ENCODE measurements at regions of chr1 and their contacts with region 1.

Region 1: DNA sequence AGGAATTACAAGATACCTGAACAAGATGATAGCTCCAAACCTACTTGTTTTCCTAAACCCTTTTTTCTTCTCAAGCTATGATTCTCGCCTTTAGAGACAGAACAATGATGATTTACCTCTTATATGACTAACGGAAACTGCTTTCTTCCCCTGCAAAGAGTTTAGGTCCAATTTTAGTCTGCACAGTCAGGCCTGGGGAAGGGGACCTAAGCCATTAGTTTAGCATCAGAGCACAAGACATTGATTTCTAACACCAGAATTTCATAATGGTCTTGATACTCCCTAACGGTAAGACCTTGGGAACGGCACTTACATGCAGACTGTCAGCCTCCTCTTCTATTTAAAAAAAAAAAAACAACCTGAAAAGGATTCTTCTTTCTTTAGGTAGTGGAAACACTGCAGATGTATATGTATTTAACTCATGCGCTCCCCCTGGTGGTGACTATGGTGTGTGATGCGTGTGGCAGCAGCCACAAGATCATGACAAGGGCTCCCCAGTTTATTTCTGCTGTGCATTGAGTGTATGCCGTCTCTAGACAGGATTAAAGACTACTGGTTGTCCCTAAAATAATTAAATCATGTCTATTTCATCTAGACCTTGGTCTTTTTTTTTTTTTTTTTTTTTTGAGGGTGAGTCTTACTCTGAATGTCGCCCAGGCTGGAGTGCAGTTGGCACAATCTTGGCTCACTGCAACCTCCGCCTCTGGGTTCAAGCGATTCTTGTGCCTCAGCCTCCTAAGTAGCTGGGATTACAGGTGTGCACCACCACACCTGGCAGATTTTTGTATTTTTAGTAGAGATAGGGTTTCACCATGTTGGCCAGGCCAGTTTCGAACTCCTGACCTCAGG is 37.3 kb upstream of the TMEM222 start:
- DNase-seq: peak; percentile 88 to 93
- ATAC-seq: peak; percentile 90
- H3K4me3 ChIP-seq: no peak overlapping the region
- H3K27ac ChIP-seq: no peak overlapping the region
- H3K4me1 ChIP-seq: no peaks in the 10 kb centered on the region
- H3K27me3 ChIP-seq: no peaks in the 10 kb centered on the region

Region 2: GRCh38 chr1:27044613-27045151 is 240.0 kb before region 1 on chr1:
- intact Hi-C with region 1: loop called (anchors 5 kb)
- DNase-seq: peak; percentile 88 to 97
- ATAC-seq: peak; percentile 94
- H3K4me3 ChIP-seq: no peak overlapping the region
- H3K27ac ChIP-seq: no peak overlapping the region
- H3K4me1 ChIP-seq: no peaks in the 10 kb centered on the region
- H3K27me3 ChIP-seq: no peaks in the 10 kb centered on the region

Region 3: DNA sequence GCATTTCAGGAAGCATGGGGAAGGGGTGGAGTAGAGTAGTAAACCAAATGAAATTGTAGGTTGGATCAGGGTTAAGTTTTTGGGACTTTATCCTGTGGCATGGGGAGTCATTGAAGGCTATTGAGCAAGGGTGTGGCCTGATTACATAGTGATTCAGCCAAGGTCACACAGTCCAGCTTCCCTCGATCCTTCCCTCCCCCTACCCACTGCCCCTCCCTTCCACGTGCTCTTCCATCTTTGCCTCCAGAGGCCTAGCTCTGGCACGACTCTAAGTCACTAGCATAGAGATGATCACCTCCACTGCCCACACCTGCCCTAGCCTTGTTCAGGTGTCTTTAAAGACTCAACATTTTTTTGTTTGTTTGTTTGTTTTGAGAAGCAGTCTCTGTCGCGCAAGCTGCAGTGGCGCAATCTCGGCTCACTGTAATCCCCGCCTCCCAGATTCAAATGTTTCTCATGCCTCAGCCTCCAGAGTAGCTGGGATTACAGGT is 92.6 kb before region 1 on chr1:
- intact Hi-C with region 1: loop called in 1 of 2 experiments (anchors 5 kb)
- DNase-seq: no peak
- ATAC-seq: no peak
- H3K4me3 ChIP-seq: no peak overlapping the region
- H3K27ac ChIP-seq: no peak overlapping the region
- H3K4me1 ChIP-seq: no peaks in the 10 kb centered on the region
- H3K27me3 ChIP-seq: no peaks in the 10 kb centered on the region

Region 4: GRCh38 chr1:27203946-27204345 is 80.7 kb before region 1 on chr1:
- intact Hi-C with region 1: loop called (anchors 2 to 5 kb)
- DNase-seq: no peak
- ATAC-seq: no peak
- H3K4me3 ChIP-seq: no peak overlapping the region
- H3K27ac ChIP-seq: no peak overlapping the region
- H3K4me1 ChIP-seq: no peaks in the 10 kb centered on the region
- H3K27me3 ChIP-seq: no peaks in the 10 kb centered on the region

Measured in aorta (tissue), 5 donors.